ENCODE measurements at regions of chr11 and their contacts with region 1.

Region 1: GRCh38 chr11:45771566-45772448 is 33.1 kb upstream of the SLC35C1 start:
- DNase-seq: no peak
- H3K4me3 ChIP-seq: peak overlapping the region; percentile 45
- H3K27me3 ChIP-seq: peaks cover 3% of the 10 kb centered on the region
- CTCF ChIP-seq: peak; percentile 96

Region 2: GRCh38 chr11:45339729-45340519 is 431.9 kb before region 1 on chr11:
- CTCF ChIA-PET with region 1: interaction called, 22 read pairs
- POLR2A ChIA-PET with region 1: no interaction called
- DNase-seq: peak; percentile 14
- H3K4me3 ChIP-seq: peak overlapping the region; percentile 23; the same call in 1 of the 2 replicates
- H3K27me3 ChIP-seq: peaks cover 12% of the 10 kb centered on the region
- CTCF ChIP-seq: peak; percentile 93

Region 3: DNA sequence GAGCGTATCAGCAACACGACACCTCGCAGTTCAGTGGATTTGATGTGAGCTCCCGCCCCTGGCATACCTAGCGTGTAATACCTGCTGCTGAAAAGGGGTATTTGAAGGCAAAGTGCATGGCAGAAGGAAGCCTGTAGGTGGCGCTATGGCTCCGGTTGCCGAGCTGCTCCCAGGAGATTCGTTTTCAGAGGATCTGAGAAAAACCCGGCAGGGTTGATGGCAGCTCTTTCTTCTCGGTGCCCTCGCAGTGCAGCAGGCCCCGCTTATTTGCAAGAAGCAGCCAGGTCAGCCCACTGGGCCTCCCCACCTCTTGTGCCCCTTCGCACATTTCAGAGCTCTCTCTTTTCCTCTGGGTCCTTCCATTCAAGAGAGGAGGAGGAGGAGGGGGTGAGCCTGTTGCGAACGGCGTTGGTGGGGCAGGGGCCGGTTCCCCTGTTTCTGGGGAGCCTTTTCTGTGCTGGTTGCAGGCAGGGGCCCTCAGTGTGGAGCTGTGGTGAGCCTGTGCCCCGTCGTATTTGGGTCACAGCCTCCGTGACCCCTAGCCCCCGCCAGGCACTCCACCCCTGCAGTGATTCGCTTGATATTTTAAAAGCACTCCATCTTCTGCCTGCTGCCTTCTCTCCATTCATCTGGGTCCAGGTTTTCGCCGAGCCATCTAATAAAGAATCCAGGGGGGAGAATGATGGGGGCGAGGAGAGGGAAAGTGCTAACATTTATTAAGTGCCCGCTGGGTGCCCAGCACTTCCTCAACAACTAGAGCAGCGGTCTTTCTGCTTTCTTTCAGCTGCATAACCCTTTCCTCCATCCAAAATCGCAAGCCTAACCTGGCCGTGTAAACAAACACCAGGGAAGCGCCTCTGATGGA is 400.3 kb before region 1 on chr11:
- CTCF ChIA-PET with region 1: interaction called, 67 read pairs
- POLR2A ChIA-PET with region 1: no interaction called
- DNase-seq: no peak
- H3K4me3 ChIP-seq: no peak overlapping the region
- H3K27me3 ChIP-seq: peaks cover 9% of the 10 kb centered on the region
- CTCF ChIP-seq: peak; percentile 87

Region 4: GRCh38 chr11:45655347-45655756 is 116.5 kb before region 1 on chr11:
- CTCF ChIA-PET with region 1: interaction called, 24 read pairs
- POLR2A ChIA-PET with region 1: no interaction called
- DNase-seq: no peak
- H3K4me3 ChIP-seq: no peak overlapping the region
- H3K27me3 ChIP-seq: no peaks in the 10 kb centered on the region; the same call in 1 of the 2 replicates
- CTCF ChIP-seq: peak; percentile 96

Region 5: GRCh38 chr11:45754261-45754709 is 17.5 kb before region 1 on chr11:
- CTCF ChIA-PET with region 1: interaction called, 31 read pairs
- POLR2A ChIA-PET with region 1: no interaction called
- DNase-seq: no peak
- H3K4me3 ChIP-seq: no peak overlapping the region
- H3K27me3 ChIP-seq: peaks cover 5% of the 10 kb centered on the region
- CTCF ChIP-seq: no peak

Region 6: GRCh38 chr11:45761659-45762058 is 10.1 kb before region 1 on chr11:
- CTCF ChIA-PET with region 1: interaction called, 26 read pairs
- POLR2A ChIA-PET with region 1: no interaction called
- DNase-seq: no peak
- H3K4me3 ChIP-seq: no peak overlapping the region
- H3K27me3 ChIP-seq: no peaks in the 10 kb centered on the region
- CTCF ChIP-seq: no peak

Region 7: DNA sequence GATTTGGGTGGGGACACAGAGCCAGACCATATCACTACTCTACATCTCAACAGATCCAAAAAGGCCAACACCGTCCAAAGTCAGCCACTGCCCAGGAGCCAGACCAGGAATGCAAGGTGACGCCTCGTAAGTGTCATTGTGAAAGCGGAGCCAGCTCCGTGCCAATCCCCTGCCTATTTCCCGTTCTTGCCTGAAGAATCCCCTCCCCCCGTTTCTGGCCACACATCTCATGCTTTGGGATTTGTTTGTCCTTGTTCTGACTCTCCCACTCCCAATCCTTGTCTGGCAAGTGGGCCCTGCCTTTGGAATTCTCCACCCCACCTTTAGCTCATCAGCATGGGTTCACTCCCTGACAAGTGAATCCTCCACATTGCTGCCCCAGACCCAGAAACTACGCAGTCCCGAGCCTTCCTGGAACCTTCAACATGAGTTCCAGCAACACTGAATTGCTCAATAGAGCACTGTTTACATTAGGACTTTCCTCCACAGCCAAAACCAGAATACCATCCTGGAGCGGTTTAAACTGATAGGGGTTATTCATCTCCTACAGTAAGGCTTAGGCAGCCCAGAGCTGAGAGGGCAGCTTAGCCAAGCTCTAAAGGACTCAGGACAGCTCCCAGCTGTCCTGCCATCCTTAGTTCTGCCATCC is 27.1 kb after region 1 on chr11:
- CTCF ChIA-PET with region 1: interaction called, 32 read pairs
- POLR2A ChIA-PET with region 1: no interaction called
- DNase-seq: no peak
- H3K4me3 ChIP-seq: no peak overlapping the region
- H3K27me3 ChIP-seq: peaks cover 2% of the 10 kb centered on the region; the same call in 1 of the 2 replicates
- CTCF ChIP-seq: no peak